ENCODE measurements at regions of chr12 and their contacts with region 1.

Region 1: DNA sequence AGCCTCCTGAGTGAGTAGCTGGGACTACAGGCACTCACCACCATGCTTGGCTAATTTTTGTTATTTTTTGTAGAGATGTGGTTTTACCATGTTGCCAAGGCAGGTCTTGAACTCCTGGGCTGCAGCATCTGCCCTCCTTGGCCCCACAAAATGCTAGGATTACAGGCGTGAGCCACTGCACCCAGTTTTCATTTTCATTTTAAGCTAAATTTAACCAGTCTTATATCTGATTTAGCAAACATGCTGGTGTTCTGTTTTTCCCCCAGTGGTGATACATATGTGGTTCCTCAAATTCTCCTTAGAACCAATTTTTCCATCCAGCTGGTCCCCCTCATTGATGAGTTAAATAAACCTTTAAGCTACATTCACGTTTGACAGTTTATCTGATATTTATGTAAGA is 43.8 kb upstream of the BICD1 start:
- DNase-seq: no peak
- ATAC-seq: no peak
- H3K4me3 ChIP-seq: no peak overlapping the region
- H3K4me3 Mint-ChIP-seq: no peak overlapping the region
- H3K27ac ChIP-seq: no peak overlapping the region
- H3K27ac Mint-ChIP-seq: no peak overlapping the region
- H3K4me1 ChIP-seq: no peaks in the 10 kb centered on the region
- H3K4me1 Mint-ChIP-seq: peaks cover 7 to 26% (median 15%) of the 10 kb centered on the region in 7 donors
- H3K27me3 ChIP-seq: no peaks in the 10 kb centered on the region
- H3K27me3 Mint-ChIP-seq: no peaks in the 10 kb centered on the region

Region 2: DNA sequence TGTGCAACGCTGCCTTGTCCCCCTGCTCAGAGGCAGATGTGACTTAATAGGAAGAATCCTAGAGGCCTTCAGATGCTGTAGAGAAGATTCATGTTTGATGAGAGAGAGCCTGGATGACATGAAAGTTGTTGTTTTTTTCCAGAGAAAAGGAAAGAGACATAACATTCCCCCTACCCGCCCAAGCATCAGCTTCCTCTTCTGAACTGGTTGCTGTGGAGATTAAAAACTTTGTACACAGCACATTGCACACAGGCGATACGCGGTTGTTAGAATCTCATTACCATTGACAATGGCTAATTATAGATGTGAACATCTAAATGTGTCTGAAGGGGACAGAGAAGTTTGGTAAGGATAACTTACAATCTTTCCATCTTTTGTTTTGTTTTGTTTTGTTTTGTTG is 417.0 kb before region 1 on chr12:
- CTCF ChIA-PET with region 1: no interaction called
- POLR2A ChIA-PET with region 1: interaction called, 11 read pairs
- intact Hi-C with region 1: no loop called
- DNase-seq: no peak
- ATAC-seq: no peak
- H3K4me3 ChIP-seq: no peak overlapping the region
- H3K4me3 Mint-ChIP-seq: no peak overlapping the region
- H3K27ac ChIP-seq: no peak overlapping the region
- H3K27ac Mint-ChIP-seq: no peak overlapping the region
- H3K4me1 ChIP-seq: no peaks in the 10 kb centered on the region
- H3K4me1 Mint-ChIP-seq: peaks cover 0 to 6% (median 0%) of the 10 kb centered on the region in 7 donors
- H3K27me3 ChIP-seq: no peaks in the 10 kb centered on the region
- H3K27me3 Mint-ChIP-seq: no peaks in the 10 kb centered on the region

Region 3: GRCh38 chr12:31682136-31682962 is 380.5 kb before region 1 on chr12:
- CTCF ChIA-PET with region 1: interaction called, 3 read pairs
- POLR2A ChIA-PET with region 1: no interaction called
- intact Hi-C with region 1: loop called (anchors 1 kb)
- DNase-seq: peak; percentile 30 to 72 (median 66)
- ATAC-seq: peak; percentile 96
- H3K4me3 ChIP-seq: no peak overlapping the region
- H3K4me3 Mint-ChIP-seq: peak overlapping the region in 9 of 10 donors; percentile 2 to 74 (median 23)
- H3K27ac ChIP-seq: no peak overlapping the region
- H3K27ac Mint-ChIP-seq: peak overlapping the region; percentile 9 to 97 (median 74)
- H3K4me1 ChIP-seq: peaks cover 0 to 5% of the 10 kb centered on the region in 2 donors
- H3K4me1 Mint-ChIP-seq: peaks cover 5 to 17% (median 11%) of the 10 kb centered on the region in 7 donors
- H3K27me3 ChIP-seq: no peaks in the 10 kb centered on the region
- H3K27me3 Mint-ChIP-seq: no peaks in the 10 kb centered on the region

Region 4: DNA sequence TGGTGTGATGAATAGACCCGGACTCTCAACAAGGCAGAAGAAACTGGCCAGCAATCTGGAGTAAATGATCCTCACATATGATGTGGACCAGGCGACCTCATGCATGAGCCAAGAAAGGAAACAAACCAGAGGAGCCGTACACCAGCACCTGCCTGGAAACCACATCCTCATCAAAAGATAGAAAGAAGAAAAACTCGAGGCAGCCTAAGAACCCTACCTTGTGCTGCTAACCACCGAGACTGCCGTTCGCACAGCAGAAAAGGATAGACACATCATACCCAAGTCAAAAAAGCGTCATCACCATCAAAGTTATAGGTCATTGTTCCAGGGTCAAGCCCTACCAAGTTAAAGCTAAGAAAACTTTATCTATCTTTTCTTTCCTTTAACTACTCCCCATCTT is 37.0 kb before region 1 on chr12:
- CTCF ChIA-PET with region 1: interaction called, 5 read pairs
- POLR2A ChIA-PET with region 1: no interaction called
- intact Hi-C with region 1: loop called in 1 of 2 experiments (anchors 5 kb)
- DNase-seq: peak; percentile 7 to 87 (median 78)
- ATAC-seq: peak; percentile 94
- H3K4me3 ChIP-seq: no peak overlapping the region
- H3K4me3 Mint-ChIP-seq: peak overlapping the region; percentile 14 to 64 (median 40)
- H3K27ac ChIP-seq: peak overlapping the region; percentile 26
- H3K27ac Mint-ChIP-seq: peak overlapping the region; percentile 57 to 92 (median 79)
- H3K4me1 ChIP-seq: peaks cover 12 to 24% of the 10 kb centered on the region in 2 donors
- H3K4me1 Mint-ChIP-seq: peaks cover 9 to 51% (median 37%) of the 10 kb centered on the region in 7 donors
- H3K27me3 ChIP-seq: no peaks in the 10 kb centered on the region
- H3K27me3 Mint-ChIP-seq: no peaks in the 10 kb centered on the region

Region 5: GRCh38 chr12:32039347-32039746 is 23.5 kb before region 1 on chr12:
- CTCF ChIA-PET with region 1: no interaction called
- POLR2A ChIA-PET with region 1: no interaction called
- intact Hi-C with region 1: no loop called
- DNase-seq: no peak
- ATAC-seq: no peak
- H3K4me3 ChIP-seq: no peak overlapping the region
- H3K4me3 Mint-ChIP-seq: no peak overlapping the region
- H3K27ac ChIP-seq: no peak overlapping the region
- H3K27ac Mint-ChIP-seq: no peak overlapping the region
- H3K4me1 ChIP-seq: no peaks in the 10 kb centered on the region
- H3K4me1 Mint-ChIP-seq: peaks cover 0 to 2% (median 0%) of the 10 kb centered on the region in 7 donors
- H3K27me3 ChIP-seq: no peaks in the 10 kb centered on the region
- H3K27me3 Mint-ChIP-seq: no peaks in the 10 kb centered on the region

Region 6: GRCh38 chr12:32106517-32107358 is 43.9 kb after region 1 on chr12 and contains the start of gene BICD1:
- CTCF ChIA-PET with region 1: no interaction called
- POLR2A ChIA-PET with region 1: interaction called, 4 read pairs
- intact Hi-C with region 1: loop called (anchors 1 to 2 kb)
- DNase-seq: peak; percentile 43 to 84 (median 65)
- ATAC-seq: peak; percentile 90
- H3K4me3 ChIP-seq: peak within 1 kb of the TSS; percentile 90
- H3K4me3 Mint-ChIP-seq: peak within 1 kb of the TSS; percentile 82 to 98 (median 96)
- H3K27ac ChIP-seq: peak within 1 kb of the TSS; percentile 67
- H3K27ac Mint-ChIP-seq: peak within 1 kb of the TSS; percentile 77 to 94 (median 91)
- H3K4me1 ChIP-seq: peaks cover 19 to 22% of the 10 kb centered on the region in 2 donors
- H3K4me1 Mint-ChIP-seq: peaks cover 11 to 42% (median 33%) of the 10 kb centered on the region in 7 donors
- H3K27me3 ChIP-seq: no peaks in the 10 kb centered on the region
- H3K27me3 Mint-ChIP-seq: peaks cover 0 to 13% (median 0%) of the 10 kb centered on the region in 5 donors
- total RNA-seq, gene BICD1: 16.7 to 25.1 (median 18.5) TPM

Region 7: DNA sequence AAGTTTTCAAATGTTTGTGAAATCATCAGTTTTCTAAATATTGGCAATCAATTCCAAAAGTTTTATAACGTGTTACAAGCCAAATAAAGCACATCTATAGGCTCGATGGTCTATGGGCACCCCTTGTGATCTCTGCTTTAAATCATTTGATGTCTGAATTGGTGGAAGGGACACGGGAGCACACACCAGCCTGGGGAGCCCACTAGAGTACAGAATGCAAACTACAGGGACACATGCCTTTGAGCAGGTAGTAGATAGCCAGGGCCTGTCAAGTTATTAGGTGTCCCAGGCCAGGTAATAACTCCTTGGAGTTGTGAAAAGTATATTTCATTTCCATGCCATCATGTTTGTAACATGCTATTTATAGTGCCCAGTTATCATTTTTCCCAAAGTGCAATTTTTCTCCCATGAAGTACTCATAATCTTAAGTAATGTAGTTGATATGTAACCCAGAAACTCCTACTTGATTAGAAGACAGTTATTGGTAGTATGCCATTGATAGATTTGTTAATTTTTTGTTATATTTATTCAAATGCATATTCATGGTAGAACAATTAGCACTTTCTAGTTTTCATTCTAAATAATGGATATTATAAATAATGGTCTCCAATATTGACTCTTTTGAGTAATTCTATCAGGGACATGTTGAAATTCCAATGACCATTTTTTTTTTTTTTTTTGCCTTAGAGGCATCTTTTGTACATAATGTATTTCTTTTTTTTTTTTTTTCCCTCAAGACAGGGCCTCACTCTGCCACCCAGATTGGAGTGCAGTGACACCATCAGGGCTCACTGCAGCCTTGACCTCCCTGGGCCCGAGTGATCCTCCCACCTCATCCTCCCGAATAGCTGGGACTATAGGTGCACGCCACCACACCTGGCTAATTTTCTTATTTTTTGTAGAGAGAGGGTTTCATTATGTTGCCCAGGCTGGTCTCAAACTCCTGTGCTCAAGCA is 239.6 kb after region 1 on chr12:
- CTCF ChIA-PET with region 1: interaction called, 4 read pairs
- POLR2A ChIA-PET with region 1: no interaction called
- intact Hi-C with region 1: loop called in 1 of 2 experiments (anchors 1 kb)
- DNase-seq: peak in 4 of 9 donors; percentile 8 to 28 (median 17)
- ATAC-seq: peak; percentile 71
- H3K4me3 ChIP-seq: no peak overlapping the region
- H3K4me3 Mint-ChIP-seq: no peak overlapping the region
- H3K27ac ChIP-seq: no peak overlapping the region
- H3K27ac Mint-ChIP-seq: peak overlapping the region in 5 of 9 donors; percentile 25 to 62 (median 31)
- H3K4me1 ChIP-seq: no peaks in the 10 kb centered on the region
- H3K4me1 Mint-ChIP-seq: peaks cover 0 to 19% (median 0%) of the 10 kb centered on the region in 7 donors
- H3K27me3 ChIP-seq: no peaks in the 10 kb centered on the region
- H3K27me3 Mint-ChIP-seq: no peaks in the 10 kb centered on the region

Region 8: GRCh38 chr12:32312049-32312670 is 249.3 kb after region 1 on chr12:
- CTCF ChIA-PET with region 1: interaction called, 12 read pairs
- POLR2A ChIA-PET with region 1: no interaction called
- intact Hi-C with region 1: loop called (anchors 1 kb)
- DNase-seq: peak in 7 of 9 donors; percentile 22 to 63 (median 39)
- ATAC-seq: peak; percentile 69
- H3K4me3 ChIP-seq: no peak overlapping the region
- H3K4me3 Mint-ChIP-seq: peak overlapping the region in 3 of 10 donors; percentile 54 to 61 (median 54)
- H3K27ac ChIP-seq: no peak overlapping the region
- H3K27ac Mint-ChIP-seq: peak overlapping the region in 7 of 9 donors; percentile 22 to 92 (median 44)
- H3K4me1 ChIP-seq: no peaks in the 10 kb centered on the region
- H3K4me1 Mint-ChIP-seq: peaks cover 0 to 12% (median 9%) of the 10 kb centered on the region in 7 donors
- H3K27me3 ChIP-seq: no peaks in the 10 kb centered on the region
- H3K27me3 Mint-ChIP-seq: no peaks in the 10 kb centered on the region

Measured in naive thymus-derived CD4-positive, alpha-beta T cell (primary cell).